Psoas muscle (tissue), 8 donors: ENCODE measurements at regions of chr4 and their contacts with region 1.

Region 1: GRCh38 chr4:36351082-36351666 is 69.8 kb downstream of the DTHD1 start:
- DNase-seq: peak; percentile 39 to 60
- ATAC-seq: no peak
- H3K4me3 ChIP-seq: no peak overlapping the region
- H3K27ac ChIP-seq: no peak overlapping the region
- H3K4me1 ChIP-seq: no peaks in the 10 kb centered on the region
- H3K27me3 ChIP-seq: no peaks in the 10 kb centered on the region
- CTCF ChIP-seq: peak; percentile 45

Region 2: GRCh38 chr4:36385951-36386571 is 34.9 kb after region 1 on chr4:
- intact Hi-C with region 1: no loop called
- DNase-seq: no peak
- ATAC-seq: no peak
- H3K4me3 ChIP-seq: no peak overlapping the region
- H3K27ac ChIP-seq: no peak overlapping the region
- H3K4me1 ChIP-seq: no peaks in the 10 kb centered on the region
- H3K27me3 ChIP-seq: no peaks in the 10 kb centered on the region
- CTCF ChIP-seq: no peak

Region 3: DNA sequence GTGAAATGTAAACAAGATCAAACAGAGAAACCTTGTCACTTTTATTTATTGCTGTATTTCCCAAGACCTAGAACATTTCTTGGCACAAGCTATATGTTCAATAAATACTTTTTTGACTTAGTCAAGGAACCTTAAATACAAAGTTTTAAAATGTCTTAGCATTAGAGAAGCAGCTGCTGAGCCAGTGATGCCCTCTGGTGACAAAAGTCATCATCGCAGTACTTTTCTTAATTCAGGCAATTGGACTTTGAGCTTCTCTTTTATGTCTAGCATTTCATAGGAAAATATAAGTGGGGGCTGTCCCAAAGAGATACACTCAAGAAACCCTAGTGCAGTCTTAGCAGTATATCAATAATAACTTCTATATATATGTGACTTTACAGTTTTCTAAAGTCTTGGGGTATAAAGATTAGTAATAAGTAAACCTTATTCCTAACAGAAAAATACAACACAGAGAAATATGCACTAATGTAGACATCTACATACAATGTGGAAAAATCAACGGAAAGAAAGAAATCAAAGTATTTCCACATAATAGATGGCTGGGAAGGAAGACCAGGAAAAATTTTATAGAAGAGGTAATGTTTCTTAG is 48.7 kb after region 1 on chr4:
- intact Hi-C with region 1: loop called in 1 of 2 experiments (anchors 1 kb)
- DNase-seq: no peak
- ATAC-seq: no peak
- H3K4me3 ChIP-seq: no peak overlapping the region
- H3K27ac ChIP-seq: no peak overlapping the region
- H3K4me1 ChIP-seq: no peaks in the 10 kb centered on the region
- H3K27me3 ChIP-seq: no peaks in the 10 kb centered on the region
- CTCF ChIP-seq: peak; percentile 19

Region 4: GRCh38 chr4:36414248-36414647 is 63.1 kb after region 1 on chr4:
- intact Hi-C with region 1: no loop called
- DNase-seq: no peak
- ATAC-seq: no peak
- H3K4me3 ChIP-seq: no peak overlapping the region
- H3K27ac ChIP-seq: no peak overlapping the region
- H3K4me1 ChIP-seq: no peaks in the 10 kb centered on the region
- H3K27me3 ChIP-seq: peaks cover 0 to 4% (median 0%) of the 10 kb centered on the region in 3 donors
- CTCF ChIP-seq: no peak

Region 5: DNA sequence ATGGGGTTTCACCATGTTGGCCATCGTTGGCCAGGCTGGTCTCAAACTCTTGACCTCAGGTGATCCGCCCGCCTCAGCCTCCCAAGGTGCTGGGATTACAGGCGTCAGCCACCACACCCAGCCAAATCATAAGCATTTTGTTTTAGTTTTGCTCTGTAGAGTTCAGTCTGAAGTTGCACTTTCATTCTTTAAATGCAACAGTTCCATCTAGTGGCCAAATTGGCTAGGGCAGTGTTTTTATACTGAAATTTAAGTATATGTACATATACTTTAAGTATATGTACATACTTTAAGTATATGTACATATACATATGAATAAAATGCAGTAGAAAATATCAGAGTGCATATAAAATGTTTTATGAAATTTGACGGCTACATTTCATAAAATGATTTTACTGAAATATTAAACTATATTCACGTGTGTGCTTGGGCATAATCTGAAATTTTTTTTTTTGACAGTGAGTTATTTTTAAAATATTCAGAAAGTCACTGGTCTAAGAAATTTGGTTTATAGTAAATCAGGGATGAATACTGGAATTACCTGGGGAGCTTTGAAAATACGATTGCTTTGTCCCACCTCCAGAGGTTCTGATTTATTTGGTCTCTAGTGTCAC is 1038.9 kb after region 1 on chr4:
- intact Hi-C with region 1: loop called in 1 of 2 experiments (anchors 10 kb)
- DNase-seq: no peak
- ATAC-seq: no peak
- H3K4me3 ChIP-seq: no peak overlapping the region
- H3K27ac ChIP-seq: no peak overlapping the region
- H3K4me1 ChIP-seq: no peaks in the 10 kb centered on the region
- H3K27me3 ChIP-seq: peaks cover 0 to 3% (median 0%) of the 10 kb centered on the region in 3 donors
- CTCF ChIP-seq: peak; percentile 66